ENCODE measurements at regions of chr20 and their contacts with region 1.

Region 1: DNA sequence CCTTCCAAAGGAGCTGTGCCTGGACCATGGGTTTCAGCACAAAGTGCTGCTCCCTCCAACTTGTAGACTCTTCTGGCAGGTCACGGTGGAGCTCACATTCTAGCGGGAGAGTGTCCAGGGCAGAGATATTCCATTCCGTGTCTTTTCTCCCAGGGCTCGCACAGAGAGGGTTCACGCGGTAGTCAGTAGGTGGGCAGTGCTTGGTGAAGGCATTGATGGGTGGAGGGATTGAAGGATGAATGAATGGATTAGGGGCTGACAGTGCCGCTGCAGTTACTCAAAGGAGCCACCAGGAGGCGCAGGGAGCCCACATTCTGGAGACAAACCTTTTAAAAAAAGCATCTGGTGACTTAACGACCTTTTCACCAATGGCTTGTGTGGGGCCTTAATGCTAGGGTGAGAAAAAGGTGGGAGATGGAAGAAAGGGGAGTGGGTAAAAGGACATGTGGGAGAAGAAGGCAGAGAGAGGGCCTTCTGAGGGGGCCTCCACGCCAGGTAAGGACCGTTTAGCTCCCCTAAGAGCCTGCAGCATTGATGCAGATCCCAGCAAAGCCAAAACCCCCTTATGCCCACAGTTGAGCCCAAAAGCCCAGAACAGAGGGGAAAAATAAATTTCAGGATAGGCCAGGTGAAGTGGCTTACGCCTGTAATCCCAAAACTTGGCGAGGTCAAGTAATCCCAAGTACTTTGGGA is 17.5 kb upstream of the FAM110A start:
- DNase-seq: peak; percentile 65
- ATAC-seq: peak; percentile 57 to 66

Region 2: DNA sequence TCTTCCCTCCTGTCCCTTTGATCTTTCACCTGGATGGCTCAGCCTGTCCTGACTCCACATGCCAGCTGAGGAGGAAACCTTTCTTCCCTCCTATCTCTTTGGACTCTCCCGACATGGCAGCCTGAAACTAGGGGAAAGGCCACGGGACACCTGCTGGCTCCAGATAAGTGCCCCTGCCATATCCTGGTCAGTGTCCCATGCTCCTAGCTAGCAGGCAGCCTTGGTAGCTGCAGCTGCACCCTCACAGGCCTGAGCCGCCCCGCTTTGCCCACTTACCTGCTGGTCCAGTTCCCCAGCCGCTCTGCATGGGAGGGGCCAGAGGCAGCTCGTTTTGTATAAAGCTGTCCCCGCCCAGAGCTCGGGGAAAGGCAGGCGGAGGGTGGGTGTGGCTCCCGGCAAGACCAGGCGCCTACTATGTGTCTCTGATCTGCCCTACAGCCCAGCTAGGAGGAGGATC is 40.4 kb before region 1 on chr20:
- intact Hi-C with region 1: no loop called
- DNase-seq: no peak
- ATAC-seq: peak; percentile 24 to 27

Region 3: GRCh38 chr20:956330-956951 is 140.4 kb after region 1 on chr20:
- intact Hi-C with region 1: loop called (anchors 1 to 2 kb)
- DNase-seq: peak; percentile 66
- ATAC-seq: peak; percentile 78 to 80

Region 4: GRCh38 chr20:1108437-1108920 is 292.4 kb after region 1 on chr20:
- intact Hi-C with region 1: loop called in 1 of 2 experiments (anchors 5 kb)
- DNase-seq: peak; percentile 57
- ATAC-seq: peak; percentile 41 to 76

Region 5: DNA sequence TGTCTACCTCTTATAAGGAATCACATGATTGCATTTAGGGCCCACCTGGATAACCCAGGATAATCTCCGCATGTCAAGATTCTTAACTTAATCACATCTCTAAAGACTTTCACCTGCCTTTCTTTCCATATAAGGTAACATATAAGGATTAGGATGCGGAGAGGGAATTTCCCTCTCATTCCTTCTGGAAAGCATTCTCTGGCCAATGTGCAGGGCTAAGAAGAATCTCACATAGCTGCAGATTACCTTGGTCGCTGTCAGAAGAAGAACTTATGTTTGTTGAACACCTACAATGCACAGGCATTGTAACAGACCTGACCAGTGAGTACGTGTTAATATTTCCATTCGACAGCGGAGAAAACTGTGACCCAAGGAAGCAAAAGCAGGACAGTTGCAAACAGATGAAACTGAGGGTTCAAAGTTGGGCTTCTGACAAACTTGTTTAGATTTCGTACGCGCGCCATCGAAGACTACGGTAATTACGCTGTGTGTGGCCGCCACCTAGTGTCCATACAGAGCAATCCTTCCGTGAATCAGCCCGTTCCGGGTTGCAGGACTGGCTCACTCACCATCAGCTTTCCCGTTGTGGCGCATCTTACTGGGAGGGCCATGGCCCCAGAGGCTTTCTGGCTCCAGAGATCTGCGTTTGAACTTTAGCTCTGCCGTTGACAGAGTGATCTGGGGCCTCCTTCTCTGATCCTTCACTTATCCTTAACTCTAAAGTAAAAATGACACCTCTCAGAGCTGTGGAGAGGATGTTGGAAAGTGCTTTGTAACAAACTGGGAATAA is 396.7 kb after region 1 on chr20:
- intact Hi-C with region 1: loop called (anchors 10 kb)
- DNase-seq: peak; percentile 79
- ATAC-seq: peak; percentile 82 to 92